Activated CD4-positive, alpha-beta T cell treated with anti-CD3 and anti-CD28 coated beads, Interleukin-2, amount 10 ng/mL, durations not matched to agents 24 days and 14 days (primary cell): ENCODE measurements at regions of chr2 and their contacts with region 1.

Region 1: GRCh38 chr2:95022309-95023221 is 2.9 kb upstream of the MAL start:
- DNase-seq: peak; percentile 97
- H3K4me3 Mint-ChIP-seq: peak overlapping the region; percentile 69
- H3K27ac Mint-ChIP-seq: peak overlapping the region; percentile 81
- H3K4me1 Mint-ChIP-seq: peaks cover 42% of the 10 kb centered on the region
- H3K27me3 Mint-ChIP-seq: no peaks in the 10 kb centered on the region

Region 2: DNA sequence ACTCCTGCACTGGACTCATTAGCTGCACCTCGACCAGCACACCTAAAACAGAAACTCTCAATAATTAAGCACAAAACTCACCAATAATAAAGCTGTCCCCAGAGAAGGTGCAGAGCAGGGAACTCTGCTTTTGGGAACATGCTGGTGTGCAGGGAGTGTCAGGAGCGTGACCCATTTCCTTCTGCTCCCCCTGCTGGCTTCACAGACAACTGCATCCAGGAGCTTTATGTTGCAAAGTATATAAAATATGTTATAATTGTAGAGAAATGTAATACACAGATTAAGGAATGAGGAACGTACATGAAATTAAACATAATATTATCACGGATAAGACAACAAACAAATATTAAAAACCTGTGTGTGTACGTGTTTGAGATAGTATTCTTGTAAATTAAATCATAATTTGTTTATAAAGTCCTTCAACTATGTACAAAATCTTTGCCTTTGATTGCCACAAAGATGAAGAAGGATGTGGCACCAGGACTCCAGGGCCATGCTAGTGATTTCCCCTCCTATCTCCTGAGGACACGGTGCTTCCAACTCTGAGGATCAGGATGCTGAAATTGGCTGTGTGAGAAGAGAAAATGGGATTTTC is 65.7 kb before region 1 on chr2:
- intact Hi-C with region 1: no loop called
- DNase-seq: peak; percentile 80
- H3K4me3 Mint-ChIP-seq: no peak overlapping the region
- H3K27ac Mint-ChIP-seq: no peak overlapping the region
- H3K4me1 Mint-ChIP-seq: no peaks in the 10 kb centered on the region
- H3K27me3 Mint-ChIP-seq: peaks cover 45% of the 10 kb centered on the region

Region 3: DNA sequence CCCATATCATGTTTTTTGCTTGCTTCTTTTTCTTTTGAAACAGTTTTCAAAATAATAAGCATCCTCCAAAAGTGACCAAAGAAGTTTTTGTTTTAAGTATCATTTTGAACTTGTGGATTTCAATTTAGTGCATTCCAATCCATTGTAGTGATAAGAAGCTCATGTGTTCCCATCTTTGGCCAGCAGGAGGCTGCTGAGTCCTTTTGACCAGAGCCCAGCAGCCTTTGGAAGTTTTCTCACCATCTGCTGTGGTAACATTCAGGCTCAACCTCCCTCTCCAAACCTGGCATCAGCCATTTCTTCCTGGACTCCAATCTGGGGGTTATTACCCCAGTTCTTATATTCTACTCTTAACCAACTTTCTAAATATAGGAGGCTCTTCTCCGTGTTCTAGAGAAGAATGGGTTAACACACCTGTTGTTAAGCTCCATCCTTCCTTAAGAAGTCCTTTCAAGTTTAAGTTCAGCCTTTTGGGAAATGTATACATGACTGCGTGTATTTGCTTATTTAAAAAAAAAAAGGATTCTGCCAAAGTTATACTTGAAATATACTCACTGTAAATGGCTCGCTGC is 36.1 kb before region 1 on chr2:
- intact Hi-C with region 1: loop called (anchors 2 kb)
- DNase-seq: peak; percentile 85
- H3K4me3 Mint-ChIP-seq: no peak overlapping the region
- H3K27ac Mint-ChIP-seq: no peak overlapping the region
- H3K4me1 Mint-ChIP-seq: no peaks in the 10 kb centered on the region
- H3K27me3 Mint-ChIP-seq: peaks cover 19% of the 10 kb centered on the region

Region 4: GRCh38 chr2:95053543-95053942 is 31.0 kb after region 1 on chr2:
- intact Hi-C with region 1: loop called (anchors 1 kb)
- DNase-seq: no peak
- H3K4me3 Mint-ChIP-seq: peak overlapping the region; percentile 11
- H3K27ac Mint-ChIP-seq: peak overlapping the region; percentile 79
- H3K4me1 Mint-ChIP-seq: peaks cover 75% of the 10 kb centered on the region
- H3K27me3 Mint-ChIP-seq: no peaks in the 10 kb centered on the region

Region 5: GRCh38 chr2:95115418-95115817 is 92.9 kb after region 1 on chr2:
- intact Hi-C with region 1: loop called (anchors 1 kb)
- DNase-seq: peak; percentile 93
- H3K4me3 Mint-ChIP-seq: no peak overlapping the region
- H3K27ac Mint-ChIP-seq: no peak overlapping the region
- H3K4me1 Mint-ChIP-seq: peaks cover 40% of the 10 kb centered on the region
- H3K27me3 Mint-ChIP-seq: no peaks in the 10 kb centered on the region

Region 6: DNA sequence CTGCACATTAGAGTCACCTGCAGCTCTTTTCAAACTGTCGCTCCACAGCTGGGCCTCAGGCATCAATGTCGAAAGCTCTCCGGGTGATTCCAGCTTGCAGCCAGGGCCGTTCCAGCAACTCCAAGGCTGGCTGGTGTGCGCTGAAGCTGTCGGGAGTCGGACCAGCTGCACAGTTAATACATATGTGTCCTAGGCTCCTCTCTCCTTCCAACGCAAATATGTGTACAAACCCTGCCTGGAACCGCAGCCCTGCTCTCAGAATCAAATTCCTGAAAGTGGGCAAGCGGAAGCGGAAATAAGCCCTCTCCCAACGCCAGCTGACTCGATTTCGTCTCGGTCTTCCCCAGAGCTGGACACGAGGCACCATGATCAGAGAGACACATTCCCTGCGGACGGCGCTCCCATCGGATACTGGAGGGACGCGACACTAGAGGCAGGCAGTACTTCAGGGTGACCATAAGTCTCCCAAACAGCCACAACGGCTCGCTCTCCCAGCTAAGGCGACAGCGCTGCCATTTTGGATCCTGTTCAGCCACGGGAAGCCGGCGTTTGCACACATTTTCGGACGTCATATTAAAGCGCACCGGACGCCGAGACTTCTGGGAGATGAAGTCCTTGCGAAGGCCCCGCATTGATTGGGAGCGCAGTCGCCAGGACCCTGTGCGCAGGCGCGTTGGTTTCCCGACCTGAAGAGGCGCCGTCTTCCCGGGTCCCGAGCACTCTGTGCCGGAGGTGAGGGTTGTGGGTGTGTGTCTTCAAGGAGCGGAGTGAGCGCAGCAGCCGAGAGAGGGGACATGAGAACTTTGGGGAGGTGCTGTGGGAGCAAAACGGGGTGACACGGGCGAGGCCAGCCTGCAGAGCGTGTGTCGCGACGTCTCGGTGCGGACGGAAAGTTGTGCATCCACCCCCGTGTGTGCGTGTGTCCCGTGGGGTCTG is 142.8 kb after region 1 on chr2 and contains the start of gene ZNF2:
- intact Hi-C with region 1: loop called (anchors 2 kb)
- DNase-seq: peak; percentile 99
- H3K4me3 Mint-ChIP-seq: peak within 1 kb of the TSS; percentile 98
- H3K27ac Mint-ChIP-seq: peak within 1 kb of the TSS; percentile 97
- H3K4me1 Mint-ChIP-seq: peaks cover 26% of the 10 kb centered on the region
- H3K27me3 Mint-ChIP-seq: no peaks in the 10 kb centered on the region
- total RNA-seq, gene ZNF2: 4.4 and 5.4 TPM in 2 replicates